Posterior vena cava (tissue), 2 donors: ENCODE measurements at regions of chr2 and their contacts with region 1.

Region 1: DNA sequence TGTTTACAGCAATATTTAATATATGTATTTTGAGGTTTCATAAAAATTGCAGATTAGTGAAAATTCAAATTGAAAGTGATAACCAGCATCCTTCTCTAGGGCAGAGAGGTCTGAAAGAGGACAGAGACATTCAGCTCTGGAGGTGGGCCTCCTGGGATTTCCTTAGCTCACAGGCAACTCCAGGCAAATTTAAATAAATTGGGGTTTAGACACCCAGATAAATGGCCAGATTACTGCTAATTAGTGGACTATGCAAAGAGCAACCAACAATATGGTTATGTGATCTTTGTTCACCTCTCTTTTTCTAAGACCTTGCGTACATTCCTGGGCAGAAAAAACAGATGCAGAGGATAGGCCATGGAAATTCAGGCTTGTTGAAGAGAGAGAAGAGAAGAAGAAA is 1282.8 kb upstream of the ACVR2A start:
- DNase-seq: no peak

Region 2: DNA sequence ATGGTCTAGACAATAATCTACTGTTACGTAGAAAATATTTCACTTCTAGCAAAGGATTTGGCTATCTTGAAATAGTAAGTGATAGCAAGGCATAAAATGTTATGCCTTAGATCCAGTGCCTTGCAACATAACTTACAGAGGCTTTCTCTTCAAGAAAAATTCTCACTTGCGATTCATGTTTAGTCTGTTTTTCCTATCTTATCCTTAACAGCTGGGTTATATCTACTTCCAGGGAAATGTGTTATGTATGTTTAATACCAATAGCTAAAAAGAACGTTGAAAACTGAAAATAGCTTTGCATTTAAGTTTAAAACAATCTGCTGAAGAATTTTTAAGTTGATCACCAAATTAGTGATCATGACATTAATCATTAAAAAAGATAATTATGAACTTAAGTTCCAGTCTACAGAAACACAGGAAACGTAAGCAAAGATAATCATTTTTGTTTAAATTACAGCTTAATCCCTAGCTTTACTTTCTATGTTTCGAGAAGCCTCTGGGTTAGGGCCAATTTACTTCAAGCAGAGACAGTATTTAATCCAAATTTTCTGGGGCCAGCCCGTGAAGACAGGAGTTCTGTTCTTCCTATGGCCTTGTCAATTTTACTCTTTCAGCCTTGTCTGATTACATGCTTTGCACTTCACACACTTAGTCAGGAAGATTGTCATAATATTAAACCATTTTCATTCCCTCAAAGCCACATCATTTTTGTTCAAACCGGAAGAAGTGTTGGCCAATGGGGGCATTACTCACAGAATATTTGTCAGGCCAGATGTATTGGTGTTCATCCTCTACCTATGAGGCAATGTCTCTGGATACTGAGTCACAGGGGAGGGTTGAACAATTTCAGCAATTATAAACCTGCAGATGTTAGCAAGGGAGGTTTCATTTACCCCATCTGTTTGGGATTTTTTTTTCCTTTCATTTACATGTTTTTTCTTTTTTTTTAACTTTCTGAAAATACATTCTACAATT is 909.1 kb before region 1 on chr2:
- intact Hi-C with region 1: no loop called
- DNase-seq: no peak

Region 3: GRCh38 chr2:146506851-146507250 is 55.1 kb before region 1 on chr2:
- intact Hi-C with region 1: no loop called
- DNase-seq: no peak

Region 4: DNA sequence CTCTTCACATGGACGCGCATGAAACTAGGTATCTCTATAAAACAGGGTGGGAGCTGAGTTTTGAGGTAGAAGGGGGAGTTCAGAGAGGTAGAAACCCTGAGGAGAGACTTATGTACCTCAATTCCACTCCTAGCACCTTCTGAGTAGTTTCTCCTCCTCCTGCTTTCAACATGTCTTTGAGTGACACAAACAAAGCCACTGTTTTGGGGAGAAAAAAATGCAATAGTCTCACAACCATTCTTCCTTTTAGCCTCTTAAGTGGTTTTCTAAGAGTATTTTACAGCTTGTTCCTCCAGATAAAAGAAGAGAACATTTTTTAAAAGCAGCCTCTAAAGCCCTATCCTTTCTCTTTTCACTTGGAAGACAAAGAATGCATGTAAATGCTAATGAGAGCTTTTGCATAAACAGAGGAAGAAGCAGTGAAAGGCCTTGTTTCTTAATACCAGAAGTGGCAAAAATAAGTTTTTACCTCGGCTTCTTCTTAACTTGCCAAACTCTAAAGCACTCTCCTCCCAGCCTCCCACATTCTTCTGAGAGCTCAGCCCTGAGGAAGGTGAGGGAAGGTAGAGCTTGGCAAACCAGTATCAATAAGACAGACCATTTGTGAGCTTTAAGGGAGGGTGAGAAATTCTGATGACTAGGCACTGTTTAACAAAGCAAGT is 21.6 kb before region 1 on chr2:
- intact Hi-C with region 1: loop called in 1 of 2 experiments (anchors 1 kb)
- DNase-seq: no peak

Region 5: DNA sequence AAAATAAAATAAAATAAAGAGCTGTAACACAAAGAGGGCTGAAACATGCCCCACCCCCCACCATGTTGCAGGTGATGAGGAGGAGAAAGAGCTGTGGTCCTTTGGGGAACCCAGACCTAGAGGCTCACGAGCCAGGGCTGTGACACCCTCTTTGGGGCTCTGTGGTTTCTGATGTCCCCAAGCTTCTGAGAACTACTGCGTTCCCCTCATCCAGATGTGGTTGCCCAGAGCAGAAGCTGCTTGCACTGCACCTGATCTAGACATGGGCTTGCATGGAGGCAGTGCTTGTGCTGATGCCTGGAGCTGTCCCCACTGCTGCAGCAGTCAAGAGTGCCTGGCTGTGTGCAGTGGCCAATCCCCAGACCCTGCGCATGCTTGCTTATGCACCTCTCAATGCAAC is 595.0 kb after region 1 on chr2:
- intact Hi-C with region 1: no loop called
- DNase-seq: no peak